Activated CD8-positive, alpha-beta T cell treated with anti-CD3 and anti-CD28 coated beads for 36 hours (primary cell): ENCODE measurements at regions of chr17 and their contacts with region 1.

Region 1: GRCh38 chr17:79746889-79747507 is 16.3 kb downstream of the ENPP7 start:
- DNase-seq: no peak
- ATAC-seq: no peak
- H3K4me3 Mint-ChIP-seq: no peak overlapping the region
- H3K27ac Mint-ChIP-seq: no peak overlapping the region
- H3K4me1 Mint-ChIP-seq: peaks cover 17% of the 10 kb centered on the region
- H3K27me3 Mint-ChIP-seq: peaks cover 39% of the 10 kb centered on the region
- CTCF ChIP-seq: no peak

Region 2: DNA sequence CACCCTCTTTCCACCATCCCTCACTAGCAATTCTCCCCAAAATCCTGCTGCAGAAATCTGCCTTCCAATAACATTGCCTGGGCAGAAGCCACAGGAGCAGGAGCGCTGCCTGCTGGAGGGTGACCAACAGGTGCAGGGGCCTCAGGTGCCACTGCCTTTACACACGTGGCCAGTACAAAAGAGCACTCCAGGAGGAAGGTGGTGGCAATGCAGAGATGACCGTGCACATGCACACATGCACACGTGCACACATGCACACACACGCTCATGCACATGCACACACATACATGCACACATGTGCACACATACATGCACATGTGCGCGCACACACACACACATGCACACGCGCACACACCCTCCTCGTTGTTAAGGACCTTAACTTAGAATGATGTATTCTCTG is 148.9 kb before region 1 on chr17:
- CTCF ChIA-PET with region 1: no interaction called
- POLR2A ChIA-PET with region 1: no interaction called
- intact Hi-C with region 1: no loop called
- DNase-seq: no peak
- ATAC-seq: no peak
- H3K4me3 Mint-ChIP-seq: no peak overlapping the region
- H3K27ac Mint-ChIP-seq: no peak overlapping the region
- H3K4me1 Mint-ChIP-seq: no peaks in the 10 kb centered on the region
- H3K27me3 Mint-ChIP-seq: peaks cover 32% of the 10 kb centered on the region
- CTCF ChIP-seq: no peak

Region 3: GRCh38 chr17:79684132-79684985 is 62.6 kb before region 1 on chr17:
- CTCF ChIA-PET with region 1: no interaction called
- POLR2A ChIA-PET with region 1: no interaction called
- intact Hi-C with region 1: no loop called
- DNase-seq: no peak
- ATAC-seq: no peak
- H3K4me3 Mint-ChIP-seq: no peak overlapping the region
- H3K27ac Mint-ChIP-seq: no peak overlapping the region
- H3K4me1 Mint-ChIP-seq: no peaks in the 10 kb centered on the region
- H3K27me3 Mint-ChIP-seq: peaks cover 18% of the 10 kb centered on the region
- CTCF ChIP-seq: no peak

Region 4: DNA sequence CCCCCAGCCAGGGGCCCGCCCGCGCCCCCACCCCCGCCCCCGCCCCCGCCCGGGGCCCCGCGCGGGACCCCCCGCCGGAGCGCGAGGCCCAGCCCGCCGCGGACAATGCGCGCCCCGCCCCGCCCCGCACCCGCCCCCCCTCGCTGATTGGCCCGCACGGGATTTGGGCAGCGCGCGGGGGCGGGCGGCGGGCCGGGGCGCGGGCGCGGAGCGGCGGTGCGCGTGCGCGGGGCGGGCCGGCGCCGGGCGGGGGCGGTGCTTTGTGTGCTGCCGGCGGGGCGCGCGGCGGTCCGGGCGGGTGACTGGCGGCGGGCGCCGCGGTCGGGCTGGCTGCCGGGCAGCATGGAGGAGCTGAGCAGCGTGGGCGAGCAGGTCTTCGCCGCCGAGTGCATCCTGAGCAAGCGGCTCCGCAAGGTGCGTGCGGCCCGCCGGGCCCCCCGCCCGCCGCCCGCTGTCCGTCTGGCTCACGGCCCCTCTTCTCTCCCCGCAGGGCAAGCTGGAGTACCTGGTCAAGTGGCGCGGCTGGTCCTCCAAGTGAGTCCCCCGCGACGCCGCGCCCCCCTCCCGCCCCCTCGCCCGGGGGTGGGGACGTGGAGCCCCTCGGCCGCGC is 31.0 kb after region 1 on chr17 and contains the start of gene CBX2:
- CTCF ChIA-PET with region 1: interaction called, 19 read pairs
- POLR2A ChIA-PET with region 1: no interaction called
- intact Hi-C with region 1: no loop called
- DNase-seq: peak; percentile 77
- ATAC-seq: peak; percentile 80
- H3K4me3 Mint-ChIP-seq: peak within 1 kb of the TSS; percentile 86
- H3K27ac Mint-ChIP-seq: peak within 1 kb of the TSS; percentile 50
- H3K4me1 Mint-ChIP-seq: peaks cover 34% of the 10 kb centered on the region
- H3K27me3 Mint-ChIP-seq: peaks cover 52% of the 10 kb centered on the region
- CTCF ChIP-seq: no peak
- total RNA-seq, gene CBX2: 8.0 to 9.7 TPM

Region 5: DNA sequence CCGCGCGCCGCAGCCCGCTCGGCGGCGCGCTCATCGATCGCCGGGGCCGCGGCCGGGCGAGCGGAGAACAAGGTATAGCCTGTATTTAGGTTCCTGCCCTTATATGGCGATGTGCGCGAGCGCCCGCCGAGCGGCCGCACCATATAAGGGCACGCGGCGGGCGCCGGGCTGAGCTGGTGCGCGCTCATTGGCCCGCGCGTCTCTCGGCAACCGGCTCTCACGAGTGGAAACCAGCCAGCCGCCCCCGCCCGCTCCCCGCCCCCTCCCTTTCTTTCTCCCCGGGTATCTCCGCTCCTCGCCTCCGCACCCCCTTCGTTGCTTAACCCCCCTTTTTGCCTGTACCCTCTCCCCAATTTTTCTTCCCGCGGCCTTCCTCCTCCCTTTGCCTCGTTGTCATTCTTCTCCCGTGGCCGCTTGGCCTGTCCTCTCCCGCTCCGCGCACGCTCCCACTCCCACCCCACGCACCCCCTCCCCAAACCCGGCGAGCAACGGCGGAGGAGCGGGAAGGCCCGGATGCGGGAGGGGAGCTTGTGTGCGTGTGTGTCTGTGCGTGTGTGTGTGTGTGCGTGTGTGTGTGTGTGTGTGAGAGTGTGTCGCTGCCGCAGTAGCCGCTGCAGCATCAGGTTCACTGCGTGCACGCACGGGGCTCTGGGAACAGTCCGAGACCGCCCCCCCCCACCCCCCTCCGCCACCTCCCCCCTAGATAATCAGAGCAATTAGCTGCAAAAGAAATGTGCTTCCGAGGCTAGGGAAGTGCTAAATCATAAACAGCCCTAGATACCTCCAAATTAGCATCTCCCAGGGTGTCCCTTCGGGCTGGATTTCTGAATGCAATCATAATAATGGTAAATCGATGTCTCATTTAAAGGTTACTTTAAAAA is 63.4 kb after region 1 on chr17:
- CTCF ChIA-PET with region 1: interaction called, 10 read pairs
- POLR2A ChIA-PET with region 1: interaction called, 4 read pairs
- intact Hi-C with region 1: no loop called
- DNase-seq: peak; percentile 88
- ATAC-seq: peak; percentile 87
- H3K4me3 Mint-ChIP-seq: peak overlapping the region; percentile 19
- H3K27ac Mint-ChIP-seq: no peak overlapping the region
- H3K4me1 Mint-ChIP-seq: peaks cover 32% of the 10 kb centered on the region
- H3K27me3 Mint-ChIP-seq: peaks cover 62% of the 10 kb centered on the region
- CTCF ChIP-seq: no peak

Region 6: GRCh38 chr17:79905832-79906231 is 158.8 kb after region 1 on chr17:
- CTCF ChIA-PET with region 1: no interaction called
- POLR2A ChIA-PET with region 1: no interaction called
- intact Hi-C with region 1: no loop called
- DNase-seq: no peak
- ATAC-seq: peak; percentile 55
- H3K4me3 Mint-ChIP-seq: no peak overlapping the region
- H3K27ac Mint-ChIP-seq: no peak overlapping the region
- H3K4me1 Mint-ChIP-seq: no peaks in the 10 kb centered on the region
- H3K27me3 Mint-ChIP-seq: peaks cover 4% of the 10 kb centered on the region
- CTCF ChIP-seq: no peak